ENCODE measurements at regions of chr1 and their contacts with region 1.

Region 1: DNA sequence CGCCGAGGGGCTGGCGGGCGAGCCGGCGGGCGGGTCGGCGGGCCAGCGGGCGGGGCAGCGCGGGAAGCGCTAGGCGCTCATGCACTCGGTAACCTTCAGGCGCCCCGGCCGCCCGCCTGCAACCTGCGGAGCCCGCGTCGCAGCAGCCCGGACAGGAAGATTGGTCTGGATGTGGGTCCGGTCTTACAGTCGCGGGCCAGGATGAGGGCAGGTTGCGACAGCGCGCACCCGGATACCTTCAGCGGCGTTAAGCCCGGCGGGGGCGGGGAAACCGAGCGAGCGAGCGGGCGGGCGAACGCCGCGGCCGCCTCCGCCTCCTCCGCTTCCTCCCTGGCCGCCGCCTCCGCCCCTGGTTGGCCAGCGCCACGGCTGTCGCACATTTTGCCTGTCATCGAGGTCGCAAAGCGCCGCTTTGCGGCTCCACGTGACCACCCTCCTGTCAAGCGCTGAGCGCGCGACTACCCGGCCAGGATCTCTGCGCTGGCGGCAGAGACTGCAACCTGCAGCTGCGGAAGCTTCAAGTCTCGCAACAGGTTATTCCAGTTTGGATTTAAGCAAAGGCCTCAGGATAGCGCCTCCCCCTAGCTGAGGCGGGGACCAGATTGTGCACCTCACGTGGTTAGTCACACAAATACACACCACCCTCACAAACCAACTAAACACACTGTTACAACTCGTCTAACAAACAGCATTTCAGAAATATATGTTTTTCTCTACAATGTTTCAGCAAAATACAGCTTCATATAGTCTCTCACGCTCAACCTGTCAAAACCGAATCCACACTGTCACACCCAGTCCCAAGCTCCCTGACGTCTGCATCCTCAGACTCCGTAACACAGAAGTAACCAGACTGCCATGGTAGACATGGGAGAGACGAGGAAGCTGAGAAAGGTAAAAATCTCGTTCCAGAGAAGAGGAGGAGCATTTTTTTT is at the start of gene FAF1:
- DNase-seq: peak; percentile 97 to 98
- H3K4me3 ChIP-seq: peak within 1 kb of the TSS; percentile 71 to 79
- H3K27ac ChIP-seq: peak within 1 kb of the TSS; percentile 70 to 88
- H3K4me1 ChIP-seq: peaks cover 0 to 20% (median 11%) of the 10 kb centered on the region in 4 donors
- H3K27me3 ChIP-seq: no peaks in the 10 kb centered on the region
- CTCF ChIP-seq: peak; percentile 34 to 56

Region 2: DNA sequence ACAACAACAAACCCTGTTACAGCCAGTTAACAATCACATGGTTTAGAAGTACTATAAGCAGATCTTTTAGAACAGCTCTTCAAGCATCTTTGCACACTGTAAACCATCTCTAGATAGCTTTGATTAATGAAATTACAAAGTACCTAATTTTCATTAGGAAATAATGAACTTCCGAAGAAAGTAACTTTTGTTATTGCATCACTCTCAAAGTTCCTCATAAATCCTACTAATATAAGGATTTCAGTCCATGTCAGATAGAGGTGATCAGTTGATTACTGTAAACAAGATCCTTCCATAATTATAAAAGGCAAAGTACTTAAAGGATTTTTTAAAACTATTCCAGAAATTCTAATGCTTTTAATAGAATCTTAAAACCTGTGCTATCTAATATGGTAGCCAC is 58.3 kb before region 1 on chr1:
- intact Hi-C with region 1: no loop called
- DNase-seq: no peak
- H3K4me3 ChIP-seq: no peak overlapping the region
- H3K27ac ChIP-seq: no peak overlapping the region
- H3K4me1 ChIP-seq: no peaks in the 10 kb centered on the region
- H3K27me3 ChIP-seq: no peaks in the 10 kb centered on the region
- CTCF ChIP-seq: no peak

Region 3: GRCh38 chr1:52056163-52056936 is 1096.2 kb after region 1 on chr1 and contains the start of gene BTF3L4:
- intact Hi-C with region 1: loop called (anchors 10 kb)
- DNase-seq: peak; percentile 97
- H3K4me3 ChIP-seq: peak within 1 kb of the TSS; percentile 87 to 90
- H3K27ac ChIP-seq: peak within 1 kb of the TSS; percentile 89 to 94
- H3K4me1 ChIP-seq: peaks cover 0 to 46% (median 31%) of the 10 kb centered on the region in 4 donors
- H3K27me3 ChIP-seq: no peaks in the 10 kb centered on the region
- CTCF ChIP-seq: no peak